SK-N-SH (cell line): ENCODE measurements at regions of chr2 and their contacts with region 1.

Region 1: DNA sequence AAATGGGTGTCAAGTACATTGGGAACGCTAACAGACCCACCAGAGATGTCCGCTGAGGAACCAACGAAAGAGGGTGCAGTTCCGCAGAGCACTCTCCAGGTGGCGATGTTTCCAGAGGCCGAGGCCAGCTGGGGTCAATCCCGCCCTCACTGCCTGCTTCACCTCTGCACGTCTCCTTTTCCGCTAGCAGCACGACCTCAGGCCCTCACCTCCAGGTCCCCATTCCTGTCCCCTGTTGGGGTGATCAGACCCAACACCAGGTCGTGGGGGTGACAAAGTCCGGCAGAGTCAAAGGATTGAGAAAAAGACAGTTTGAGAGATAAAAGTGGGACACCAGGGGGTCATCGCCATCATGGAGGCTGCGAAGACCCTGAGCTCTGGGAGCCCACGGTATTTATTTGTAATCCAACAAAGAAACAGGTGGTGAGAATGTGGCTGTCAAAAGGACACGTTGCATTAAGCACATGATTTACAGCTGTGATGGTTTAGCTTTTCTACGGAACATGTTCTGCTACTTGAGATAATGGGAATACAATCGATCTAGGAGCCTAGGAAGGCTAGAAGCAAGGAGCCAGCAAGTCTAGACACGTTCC is 27.3 kb downstream of the ZAP70 start:
- DNase-seq: peak; percentile 85
- H3K4me3 ChIP-seq: peak overlapping the region in 1 of 2 experiments; percentile 40; a peak in 1 of 4 replicates
- H3K27ac ChIP-seq: no peak overlapping the region
- H3K4me1 ChIP-seq: no peaks in the 10 kb centered on the region; a peak in 1 of 4 replicates
- H3K27me3 ChIP-seq: no peaks in the 10 kb centered on the region
- CTCF ChIP-seq: peak; percentile 68
- EP300 ChIP-seq: no peak
- RAD21 ChIP-seq: peak; percentile 63

Region 2: GRCh38 chr2:97697252-97698235 is 43.1 kb before region 1 on chr2:
- CTCF ChIA-PET with region 1: interaction called, 18 read pairs
- POLR2A ChIA-PET with region 1: no interaction called
- DNase-seq: peak; percentile 78
- H3K4me3 ChIP-seq: peak overlapping the region in 1 of 2 experiments; percentile 33; a peak in 1 of 4 replicates
- H3K27ac ChIP-seq: no peak overlapping the region
- H3K4me1 ChIP-seq: no peaks in the 10 kb centered on the region; a peak in 1 of 4 replicates
- H3K27me3 ChIP-seq: no peaks in the 10 kb centered on the region
- CTCF ChIP-seq: peak; percentile 96
- EP300 ChIP-seq: no peak
- RAD21 ChIP-seq: peak; percentile 99

Region 3: GRCh38 chr2:97728091-97728731 is 12.5 kb before region 1 on chr2:
- CTCF ChIA-PET with region 1: interaction called, 21 read pairs
- POLR2A ChIA-PET with region 1: no interaction called
- DNase-seq: no peak
- H3K4me3 ChIP-seq: no peak overlapping the region
- H3K27ac ChIP-seq: no peak overlapping the region
- H3K4me1 ChIP-seq: no peaks in the 10 kb centered on the region
- H3K27me3 ChIP-seq: no peaks in the 10 kb centered on the region
- CTCF ChIP-seq: no peak
- EP300 ChIP-seq: no peak
- RAD21 ChIP-seq: no peak

Region 4: DNA sequence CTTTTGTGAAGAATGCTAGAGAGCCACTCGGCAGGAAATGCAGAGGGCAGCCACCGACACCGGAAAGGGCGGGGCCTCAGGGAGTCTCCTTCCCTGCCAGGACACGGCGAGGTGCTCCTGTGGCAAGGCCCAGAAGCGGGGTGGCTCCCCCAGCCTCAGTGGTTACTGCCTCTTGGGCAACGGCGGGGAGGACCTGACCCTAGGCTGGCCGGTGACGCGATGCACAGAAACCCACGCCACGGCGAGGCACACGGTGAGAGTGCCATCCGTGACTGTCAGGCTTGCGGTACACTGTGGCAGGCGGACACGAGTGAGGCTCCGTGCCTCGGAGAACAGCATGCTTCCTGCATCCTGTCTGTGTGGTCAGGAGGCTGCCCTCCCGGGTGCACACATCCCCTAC is 20.5 kb after region 1 on chr2:
- CTCF ChIA-PET with region 1: interaction called, 14 read pairs
- POLR2A ChIA-PET with region 1: no interaction called
- DNase-seq: no peak
- H3K4me3 ChIP-seq: no peak overlapping the region
- H3K27ac ChIP-seq: no peak overlapping the region
- H3K4me1 ChIP-seq: no peaks in the 10 kb centered on the region
- H3K27me3 ChIP-seq: no peaks in the 10 kb centered on the region
- CTCF ChIP-seq: no peak
- EP300 ChIP-seq: no peak
- RAD21 ChIP-seq: no peak

Region 5: DNA sequence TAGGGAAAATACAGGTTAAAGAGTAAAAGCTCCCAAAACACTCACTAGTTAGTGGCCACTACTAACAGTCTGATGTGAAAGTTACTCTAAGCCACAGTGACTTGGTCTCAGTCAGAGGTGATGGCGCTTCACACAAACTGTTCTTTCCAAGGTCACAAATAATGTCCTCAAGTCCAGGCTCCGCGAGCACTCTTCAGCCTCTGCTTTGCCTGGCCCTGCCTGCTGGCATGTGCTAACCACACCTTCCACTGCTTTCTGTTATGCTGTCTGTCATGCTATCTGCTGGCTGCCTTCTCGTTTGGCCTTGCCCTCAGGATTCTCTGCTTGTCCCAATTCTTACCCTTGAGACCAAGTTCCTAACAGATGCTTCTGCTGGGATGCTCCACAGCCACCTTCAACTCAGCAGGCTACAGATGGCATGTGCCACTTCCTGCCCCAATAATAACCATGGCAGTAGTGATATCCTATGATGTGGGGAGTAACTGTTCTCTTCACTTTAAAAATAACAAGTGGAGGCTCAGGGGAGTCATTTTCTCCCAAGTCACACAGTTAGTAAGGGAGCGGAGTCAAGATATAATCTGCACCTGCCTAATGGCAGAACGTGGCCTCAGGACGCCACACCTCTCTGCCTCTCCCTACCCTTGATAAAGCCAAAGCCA is 48.4 kb after region 1 on chr2:
- CTCF ChIA-PET with region 1: no interaction called
- POLR2A ChIA-PET with region 1: no interaction called
- DNase-seq: no peak
- H3K4me3 ChIP-seq: no peak overlapping the region
- H3K27ac ChIP-seq: no peak overlapping the region
- H3K4me1 ChIP-seq: peaks cover 0 to 2% of the 10 kb centered on the region in 2 experiments; a peak in 1 of 4 replicates
- H3K27me3 ChIP-seq: no peaks in the 10 kb centered on the region
- CTCF ChIP-seq: no peak
- EP300 ChIP-seq: no peak
- RAD21 ChIP-seq: no peak

Region 6: GRCh38 chr2:98385050-98385699 is 644.5 kb after region 1 on chr2:
- CTCF ChIA-PET with region 1: interaction called, 21 read pairs
- POLR2A ChIA-PET with region 1: no interaction called
- DNase-seq: peak; percentile 85
- H3K4me3 ChIP-seq: no peak overlapping the region; a peak in 1 of 4 replicates
- H3K27ac ChIP-seq: no peak overlapping the region
- H3K4me1 ChIP-seq: peaks cover 0 to 2% of the 10 kb centered on the region in 2 experiments; a peak in 1 of 4 replicates
- H3K27me3 ChIP-seq: peaks cover 4% of the 10 kb centered on the region; the same call in 1 of the 2 replicates
- CTCF ChIP-seq: peak; percentile 95
- EP300 ChIP-seq: no peak
- RAD21 ChIP-seq: peak; percentile 99

Region 7: GRCh38 chr2:98412751-98413458 is 672.2 kb after region 1 on chr2:
- CTCF ChIA-PET with region 1: no interaction called
- POLR2A ChIA-PET with region 1: no interaction called
- DNase-seq: peak; percentile 60
- H3K4me3 ChIP-seq: no peak overlapping the region
- H3K27ac ChIP-seq: no peak overlapping the region
- H3K4me1 ChIP-seq: no peaks in the 10 kb centered on the region; a peak in 1 of 4 replicates
- H3K27me3 ChIP-seq: no peaks in the 10 kb centered on the region
- CTCF ChIP-seq: peak; percentile 78
- EP300 ChIP-seq: no peak
- RAD21 ChIP-seq: peak; percentile 91